H1 (cell line): ENCODE measurements at regions of chrX and their contacts with region 1.

Region 1: DNA sequence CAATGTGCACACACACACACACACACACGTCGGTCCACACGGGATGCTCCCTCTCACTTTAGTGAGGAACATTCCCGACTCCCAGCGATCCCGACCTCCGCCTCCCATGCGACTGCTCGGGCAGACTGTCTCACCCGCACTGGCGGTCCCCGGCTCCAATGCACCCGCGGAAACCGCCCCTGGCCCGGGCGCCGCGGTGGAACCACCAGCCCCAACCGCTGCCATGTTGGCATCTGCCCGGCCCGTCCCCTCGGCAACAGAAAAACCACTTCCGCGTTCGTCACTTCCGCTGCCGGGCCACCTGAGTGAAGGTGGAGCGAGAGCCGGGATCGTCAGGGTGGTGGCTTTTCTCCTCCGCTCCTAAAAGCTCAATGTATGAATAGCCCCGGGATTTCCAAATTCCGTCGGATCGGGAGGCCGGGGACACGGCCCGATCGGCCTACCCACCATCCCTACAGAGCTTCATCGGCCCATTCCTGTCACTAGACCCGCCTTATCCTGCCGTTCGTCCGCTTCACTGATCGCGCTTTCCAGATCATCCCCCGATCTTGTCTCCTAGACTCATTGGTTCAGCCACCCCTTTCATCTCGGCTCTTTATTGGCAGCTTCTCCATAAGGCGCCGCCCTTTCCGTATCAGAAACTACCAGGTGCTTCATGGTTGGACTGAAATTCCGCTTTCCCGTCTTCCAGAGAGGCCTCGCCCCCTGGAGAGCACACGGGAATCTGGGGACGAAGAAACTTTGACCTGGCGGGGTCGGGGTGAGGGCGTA is at the start of gene SLC35A2:
- DNase-seq: peak in 1 of 2 experiments; percentile 85
- H3K4me3 ChIP-seq: peak within 1 kb of the TSS; percentile 62 to 94 (median 80)
- H3K27ac ChIP-seq: peak within 1 kb of the TSS; percentile 75; the same call in 1 of the 2 replicates
- H3K4me1 ChIP-seq: peaks cover 0 to 4% (median 3%) of the 10 kb centered on the region in 4 experiments; a peak in 5 of 7 replicates
- H3K27me3 ChIP-seq: no peaks in the 10 kb centered on the region
- CTCF ChIP-seq: no peak
- EP300 ChIP-seq: no peak
- POLR2A ChIP-seq: no peak
- RAD21 ChIP-seq: no peak
- total RNA-seq, gene SLC35A2: 20.4 and 21.4 TPM in 2 replicates

Region 2: DNA sequence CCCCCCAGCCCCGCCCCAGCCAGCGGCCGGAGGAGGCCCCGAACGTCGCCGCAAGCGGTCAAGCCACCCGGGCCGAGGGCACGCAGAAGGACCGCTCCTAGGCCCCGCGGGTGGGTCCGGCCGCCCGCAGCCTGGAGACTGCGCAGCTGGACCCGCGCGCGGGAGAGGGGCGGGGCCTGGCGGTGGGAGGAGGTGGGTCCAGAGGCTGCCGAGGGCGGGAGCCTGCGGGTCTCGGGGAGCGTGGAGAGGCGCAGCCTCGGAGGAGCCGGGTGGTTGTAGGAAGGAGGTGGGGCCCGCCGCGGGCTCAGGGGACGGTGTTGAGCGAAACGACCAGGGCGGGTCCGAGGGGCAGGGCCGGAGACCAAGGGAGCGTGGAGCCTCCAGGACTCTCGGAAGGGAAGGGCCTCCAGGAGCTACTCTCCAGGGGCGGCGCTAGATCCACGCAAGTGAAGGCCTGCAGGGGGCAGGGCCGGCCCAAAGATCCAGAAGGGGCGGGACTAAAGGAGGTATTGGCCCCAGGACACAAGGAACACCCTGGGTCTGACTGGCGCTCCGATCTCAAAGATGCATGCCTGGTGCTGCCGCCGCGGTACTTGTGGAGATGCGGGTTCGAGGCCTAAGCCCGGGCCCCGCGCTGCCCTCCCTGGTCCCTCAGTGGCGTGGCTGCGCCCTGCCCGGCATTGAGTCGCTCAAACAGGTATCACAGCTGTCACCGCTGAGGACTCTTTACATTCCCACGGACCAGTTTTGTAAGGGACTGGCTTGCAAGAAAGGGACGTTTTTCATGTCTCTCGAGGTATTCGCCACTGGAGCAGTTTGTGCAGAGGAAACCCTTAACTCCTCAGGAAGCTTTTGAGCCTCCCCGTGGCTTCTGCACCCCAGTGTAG is 20.0 kb before region 1 on chrX:
- CTCF ChIA-PET with region 1: no interaction called
- POLR2A ChIA-PET with region 1: interaction called, 49 read pairs
- DNase-seq: peak; percentile 49 to 71
- H3K4me3 ChIP-seq: peak overlapping the region; percentile 30 to 76 (median 46)
- H3K27ac ChIP-seq: no peak overlapping the region
- H3K4me1 ChIP-seq: peaks cover 0 to 4% (median 2%) of the 10 kb centered on the region in 4 experiments; a peak in 2 of 7 replicates
- H3K27me3 ChIP-seq: no peaks in the 10 kb centered on the region
- CTCF ChIP-seq: peak in 2 of 3 experiments; percentile 46 to 48; a peak in 3 of 4 replicates
- EP300 ChIP-seq: no peak
- POLR2A ChIP-seq: 0 out of 3 replicates have a peak, but pooled peaks of 1 of the 2 experiments have one; percentile 20
- RAD21 ChIP-seq: peak; percentile 37 to 41; a peak in 3 of 4 replicates

Region 3: DNA sequence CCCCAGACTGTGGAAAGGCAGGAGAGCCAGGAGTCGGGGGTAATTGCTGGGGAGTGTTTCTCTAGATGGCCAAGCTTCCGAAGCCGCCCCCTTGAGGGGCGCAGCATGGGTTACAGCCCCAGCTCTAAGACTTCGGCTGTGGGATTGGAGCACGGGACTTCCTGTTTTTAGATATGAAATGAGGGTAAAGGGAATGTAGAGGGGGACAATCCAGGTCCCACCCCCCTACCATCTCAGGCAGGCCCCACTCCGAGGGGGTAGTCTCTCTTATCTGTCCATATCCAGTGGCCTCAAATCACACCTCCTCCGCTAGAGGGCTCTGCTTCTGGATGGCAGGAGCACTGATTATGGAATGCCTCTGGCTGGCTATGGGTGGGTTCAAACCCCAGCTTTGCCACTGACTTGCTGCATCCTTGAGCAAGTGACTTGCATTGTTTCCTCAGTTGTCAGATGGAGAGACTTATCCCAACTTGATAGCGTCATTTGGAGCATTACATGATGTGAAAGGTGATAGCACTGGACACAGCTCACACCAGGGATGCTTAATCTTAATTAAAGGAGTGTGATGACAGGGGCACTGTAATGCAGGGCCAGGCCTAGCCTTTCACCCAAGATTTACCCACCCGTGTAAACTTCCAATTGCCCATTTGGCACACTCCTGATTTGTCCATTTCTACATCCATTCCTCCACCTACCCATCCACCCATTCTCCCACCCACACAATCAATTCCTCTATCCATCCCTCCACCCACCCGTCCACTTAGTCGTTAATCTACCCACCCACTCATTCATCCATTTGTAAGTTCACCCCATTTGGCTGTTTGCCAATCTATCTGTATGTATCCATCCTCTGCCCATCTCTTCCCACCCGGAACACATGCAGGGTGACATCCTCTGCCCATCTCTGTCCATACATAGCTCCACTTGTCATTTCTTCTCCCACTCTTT is 60.9 kb after region 1 on chrX:
- CTCF ChIA-PET with region 1: no interaction called
- POLR2A ChIA-PET with region 1: interaction called, 15 read pairs
- DNase-seq: peak in 1 of 2 experiments; percentile 54
- H3K4me3 ChIP-seq: peak overlapping the region; percentile 39 to 70 (median 50)
- H3K27ac ChIP-seq: no peak overlapping the region; the same call in 1 of the 2 replicates
- H3K4me1 ChIP-seq: peaks cover 0 to 3% (median 0%) of the 10 kb centered on the region in 4 experiments; a peak in 1 of 7 replicates
- H3K27me3 ChIP-seq: no peaks in the 10 kb centered on the region
- CTCF ChIP-seq: peak in 2 of 3 experiments; percentile 39 to 70; a peak in 3 of 4 replicates
- EP300 ChIP-seq: no peak
- POLR2A ChIP-seq: peak in 1 of 2 experiments; percentile 59; a peak in 2 of 3 replicates
- RAD21 ChIP-seq: peak in 1 of 2 experiments; percentile 22; a peak in 1 of 4 replicates